PC-3 (cell line): ENCODE measurements at regions of chr12 and their contacts with region 1.

Region 1: DNA sequence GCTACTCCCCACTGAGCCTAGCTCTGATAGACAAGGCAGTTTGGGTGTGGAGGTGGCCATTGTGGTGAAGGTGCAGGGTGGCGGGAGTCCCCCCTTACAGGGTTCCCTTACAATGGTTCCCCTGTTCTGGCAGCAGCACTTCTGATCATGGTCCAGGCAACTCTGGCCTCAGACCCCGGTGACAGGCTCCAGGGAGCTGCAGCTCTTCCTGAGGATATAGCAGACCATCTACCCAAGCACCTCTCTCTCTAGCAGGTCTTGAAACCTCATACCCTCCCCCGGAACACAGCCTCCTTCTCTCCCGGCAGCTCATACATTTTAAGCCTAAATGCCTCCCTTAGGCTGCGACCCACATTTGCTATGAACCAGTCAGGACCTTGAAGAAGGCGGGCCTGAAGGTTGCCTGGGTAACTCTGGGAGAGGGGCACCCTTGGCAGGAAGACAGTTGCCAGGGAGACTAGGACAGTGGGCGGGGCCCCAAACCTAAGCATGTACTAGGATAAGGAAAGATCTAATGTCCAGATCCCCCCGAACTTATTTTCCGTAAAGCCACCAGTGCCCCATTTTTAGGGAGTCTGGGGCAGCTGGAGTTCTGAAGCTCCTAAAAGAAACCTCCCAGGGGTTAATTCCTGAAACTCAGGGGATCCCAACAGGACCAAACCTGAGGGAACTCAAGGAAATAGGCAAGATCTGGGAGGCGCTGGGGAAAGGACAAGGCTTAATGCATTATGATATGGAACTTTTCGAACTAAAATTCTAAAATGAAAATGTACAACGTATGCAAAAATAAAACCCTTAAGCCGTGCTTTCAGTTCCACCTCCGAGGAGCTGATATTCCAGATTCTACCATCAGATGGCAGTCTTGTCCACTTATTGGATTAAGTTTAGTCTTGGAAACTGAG is 4.5 kb upstream of the GDF11 start:
- DNase-seq: peak; percentile 98
- ATAC-seq: peak; percentile 53
- H3K4me3 ChIP-seq: peak overlapping the region; percentile 82
- H3K27ac ChIP-seq: no peak overlapping the region
- H3K4me1 ChIP-seq: peaks cover 14% of the 10 kb centered on the region
- H3K27me3 ChIP-seq: no peaks in the 10 kb centered on the region
- CTCF ChIP-seq: peak; percentile 90

Region 2: GRCh38 chr12:55681142-55682077 is 57.0 kb before region 1 on chr12:
- CTCF ChIA-PET with region 1: interaction called, 16 read pairs
- POLR2A ChIA-PET with region 1: no interaction called
- intact Hi-C with region 1: loop called (anchors 1 kb)
- DNase-seq: peak; percentile 92
- ATAC-seq: peak; percentile 91
- H3K4me3 ChIP-seq: peak overlapping the region; percentile 74
- H3K27ac ChIP-seq: peak overlapping the region; percentile 12
- H3K4me1 ChIP-seq: 0 out of 2 replicates have a peak, but pooled peaks cover 12% of the 10 kb centered on the region
- H3K27me3 ChIP-seq: no peaks in the 10 kb centered on the region
- CTCF ChIP-seq: peak; percentile 80

Region 3: DNA sequence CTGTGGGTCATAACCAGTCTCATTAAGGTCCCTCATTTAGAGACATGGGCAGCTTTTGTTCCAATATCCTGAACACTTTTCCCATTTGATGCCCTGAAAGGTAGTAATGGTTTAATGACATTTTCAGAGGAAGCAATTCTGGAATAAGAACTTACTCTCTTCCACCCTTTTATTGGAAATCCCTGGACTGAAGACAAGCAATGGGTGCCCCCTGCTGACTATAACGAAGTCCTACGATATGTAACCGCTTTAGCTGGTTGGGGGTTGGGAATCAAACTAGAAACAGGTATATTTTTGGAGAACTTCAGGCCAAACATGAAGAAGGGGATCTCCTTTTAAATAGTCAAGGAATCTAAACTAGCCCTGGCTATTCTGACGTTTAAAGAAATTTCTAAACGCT is 58.7 kb after region 1 on chr12:
- CTCF ChIA-PET with region 1: interaction called, 8 read pairs
- POLR2A ChIA-PET with region 1: no interaction called
- intact Hi-C with region 1: loop called (anchors 1 kb)
- DNase-seq: peak; percentile 47
- ATAC-seq: no peak
- H3K4me3 ChIP-seq: no peak overlapping the region
- H3K27ac ChIP-seq: no peak overlapping the region
- H3K4me1 ChIP-seq: no peaks in the 10 kb centered on the region
- H3K27me3 ChIP-seq: no peaks in the 10 kb centered on the region
- CTCF ChIP-seq: peak; percentile 68

Region 4: DNA sequence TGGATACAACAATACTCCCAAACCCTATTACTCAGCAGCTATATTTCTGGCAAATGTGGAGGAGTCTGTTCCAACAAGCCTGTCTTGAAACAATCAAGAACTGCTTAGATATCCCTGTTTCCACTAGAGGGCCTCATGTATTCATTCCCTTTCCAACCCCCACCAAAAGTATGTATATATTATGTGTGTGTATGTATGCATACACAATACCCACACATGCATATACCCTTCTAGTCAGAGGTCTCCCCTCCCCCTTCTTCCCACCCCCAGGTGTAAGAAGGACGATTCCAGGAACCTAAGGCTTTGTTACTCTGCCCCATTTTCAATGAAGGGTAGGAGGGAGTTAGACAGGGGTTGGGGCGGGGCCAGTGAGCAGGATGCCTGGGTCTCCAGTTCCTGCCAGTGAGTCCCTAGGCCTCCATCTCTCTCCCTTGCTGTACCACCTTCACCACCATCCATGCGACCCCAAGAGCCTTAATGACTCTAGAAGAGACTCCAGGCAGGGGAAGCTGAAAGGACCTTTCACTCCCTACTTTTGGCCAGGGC is 192.5 kb after region 1 on chr12 and contains the start of gene DGKA:
- CTCF ChIA-PET with region 1: interaction called, 3 read pairs
- POLR2A ChIA-PET with region 1: no interaction called
- intact Hi-C with region 1: loop called (anchors 2 kb)
- DNase-seq: peak; percentile 75
- ATAC-seq: peak; percentile 23
- H3K4me3 ChIP-seq: peak within 1 kb of the TSS; percentile 82
- H3K27ac ChIP-seq: peak within 1 kb of the TSS; percentile 38
- H3K4me1 ChIP-seq: peaks cover 47% of the 10 kb centered on the region
- H3K27me3 ChIP-seq: no peaks in the 10 kb centered on the region
- CTCF ChIP-seq: peak; percentile 81
- total RNA-seq, gene DGKA: 27.2 and 41.5 TPM in 2 replicates

Region 5: GRCh38 chr12:55973598-55974307 is 235.4 kb after region 1 on chr12 and contains the start of gene RAB5B:
- CTCF ChIA-PET with region 1: interaction called, 6 read pairs
- POLR2A ChIA-PET with region 1: interaction called, 3 read pairs
- intact Hi-C with region 1: loop called (anchors 1 kb)
- DNase-seq: peak; percentile 100
- ATAC-seq: peak; percentile 93
- H3K4me3 ChIP-seq: peak within 1 kb of the TSS; percentile 93
- H3K27ac ChIP-seq: peak within 1 kb of the TSS; percentile 78
- H3K4me1 ChIP-seq: peaks cover 24% of the 10 kb centered on the region
- H3K27me3 ChIP-seq: no peaks in the 10 kb centered on the region
- CTCF ChIP-seq: no peak
- total RNA-seq, gene RAB5B: 48.8 and 50.6 TPM in 2 replicates